Upper lobe of right lung (tissue), 1 donor: ENCODE measurements at regions of chr4 and their contacts with region 1.

Region 1: DNA sequence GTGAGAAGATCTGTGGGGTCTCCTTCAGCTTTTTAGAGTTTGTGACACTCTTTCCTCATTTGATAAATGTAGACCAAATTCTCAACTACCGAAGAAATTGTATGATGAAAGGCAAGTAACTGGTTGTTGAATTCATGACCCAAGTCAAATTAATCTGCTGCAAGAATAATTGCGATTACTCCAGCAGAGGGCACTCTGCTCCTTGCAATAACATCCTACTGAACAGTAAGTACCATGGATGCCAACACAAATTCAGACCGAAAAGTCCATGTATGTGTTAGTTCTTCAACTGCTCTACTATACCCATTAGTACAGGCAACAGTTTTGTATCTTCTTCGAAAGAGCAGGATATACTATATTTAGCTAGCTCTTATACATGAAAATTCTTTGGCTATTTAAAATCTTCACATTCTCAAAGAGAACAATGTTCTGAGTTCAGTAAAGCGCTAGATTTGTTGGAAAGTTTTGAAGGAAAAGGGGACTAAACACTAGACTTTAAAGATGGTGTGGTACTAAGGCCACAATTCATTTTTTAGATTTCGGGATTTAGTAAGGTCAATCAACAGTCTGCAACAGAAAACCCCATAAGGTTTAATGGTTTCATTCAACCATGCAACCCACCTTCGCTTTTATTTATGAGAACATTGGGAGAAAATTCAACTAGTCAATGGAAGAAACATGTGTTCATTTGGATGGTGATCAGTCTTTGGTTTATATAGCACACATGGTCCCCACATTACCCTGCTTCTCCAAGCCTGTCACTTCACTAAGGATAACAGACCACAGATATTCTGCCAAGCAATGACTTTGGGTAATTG is 105.4 kb upstream of the TBC1D9 start:
- DNase-seq: no peak
- ATAC-seq: peak; percentile 89
- H3K4me3 ChIP-seq: no peak overlapping the region
- H3K27ac ChIP-seq: no peak overlapping the region
- H3K4me1 ChIP-seq: no peaks in the 10 kb centered on the region
- H3K27me3 ChIP-seq: no peaks in the 10 kb centered on the region
- CTCF ChIP-seq: peak; percentile 77

Region 2: GRCh38 chr4:141133146-141133998 is 271.8 kb after region 1 on chr4 and contains the start of gene RNF150:
- intact Hi-C with region 1: loop called (anchors 5 kb)
- DNase-seq: peak; percentile 81
- ATAC-seq: peak; percentile 89
- H3K4me3 ChIP-seq: peak within 1 kb of the TSS; percentile 67
- H3K27ac ChIP-seq: no peak within 1 kb of the TSS
- H3K4me1 ChIP-seq: peaks cover 7% of the 10 kb centered on the region
- H3K27me3 ChIP-seq: peaks cover 15% of the 10 kb centered on the region
- CTCF ChIP-seq: peak; percentile 57
- total RNA-seq, gene RNF150: 2.4 TPM